Calu3 (cell line): ENCODE measurements at regions of chr7 and their contacts with region 1.

Region 1: GRCh38 chr7:36430186-36430585 is 40.5 kb downstream of the ANLN start:
- DNase-seq: no peak
- H3K4me3 Mint-ChIP-seq: no peak overlapping the region
- H3K27ac Mint-ChIP-seq: no peak overlapping the region
- H3K4me1 Mint-ChIP-seq: no peaks in the 10 kb centered on the region
- H3K27me3 Mint-ChIP-seq: no peaks in the 10 kb centered on the region
- CTCF ChIP-seq: no peak

Region 2: DNA sequence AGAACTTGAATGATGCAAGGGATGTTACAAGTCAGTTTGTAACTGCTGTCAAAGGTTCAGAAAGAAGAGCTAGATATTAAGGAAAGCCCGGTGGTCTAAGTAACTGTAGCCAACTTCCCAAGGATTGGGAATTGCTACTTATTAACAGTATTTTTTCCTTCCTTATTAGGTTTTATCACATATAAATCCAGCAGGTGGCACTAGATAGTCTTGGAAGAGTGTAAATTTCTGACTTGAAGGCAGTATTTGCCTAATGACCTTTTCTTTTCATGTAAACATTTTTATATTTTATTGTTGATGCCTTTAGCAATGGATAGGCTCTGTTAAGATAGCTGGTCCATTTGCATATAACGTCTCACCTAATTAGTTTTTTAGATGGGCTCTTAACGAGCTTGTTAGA is 10.7 kb after region 1 on chr7:
- CTCF ChIA-PET with region 1: interaction called, 3 read pairs
- intact Hi-C with region 1: loop called (anchors 2 kb)
- DNase-seq: no peak
- H3K4me3 Mint-ChIP-seq: no peak overlapping the region
- H3K27ac Mint-ChIP-seq: no peak overlapping the region
- H3K4me1 Mint-ChIP-seq: no peaks in the 10 kb centered on the region
- H3K27me3 Mint-ChIP-seq: no peaks in the 10 kb centered on the region
- CTCF ChIP-seq: no peak